CD8-positive, alpha-beta T cell (primary cell): ENCODE measurements at regions of chr14 and their contacts with region 1.

Region 1: GRCh38 chr14:21383848-21384493 is at the start of gene SUPT16H:
- DNase-seq: peak; percentile 83 to 97 (median 93)
- ATAC-seq: peak; percentile 88
- H3K4me3 ChIP-seq: peak within 1 kb of the TSS; percentile 87 to 91
- H3K4me3 Mint-ChIP-seq: peak within 1 kb of the TSS; percentile 98
- H3K27ac ChIP-seq: peak within 1 kb of the TSS; percentile 89 to 96
- H3K27ac Mint-ChIP-seq: peak within 1 kb of the TSS; percentile 99
- H3K4me1 ChIP-seq: peaks cover 17% of the 10 kb centered on the region
- H3K4me1 Mint-ChIP-seq: peaks cover 43% of the 10 kb centered on the region
- H3K27me3 ChIP-seq: no peaks in the 10 kb centered on the region
- H3K27me3 Mint-ChIP-seq: no peaks in the 10 kb centered on the region
- CTCF ChIP-seq: no peak
- total RNA-seq, gene SUPT16H: 53.5 to 54.9 TPM

Region 2: GRCh38 chr14:20365928-20366327 is 1018.0 kb before region 1 on chr14:
- CTCF ChIA-PET with region 1: no interaction called
- POLR2A ChIA-PET with region 1: no interaction called
- intact Hi-C with region 1: no loop called
- DNase-seq: no peak
- ATAC-seq: no peak
- H3K4me3 ChIP-seq: no peak overlapping the region
- H3K4me3 Mint-ChIP-seq: no peak overlapping the region
- H3K27ac ChIP-seq: no peak overlapping the region
- H3K27ac Mint-ChIP-seq: no peak overlapping the region
- H3K4me1 ChIP-seq: no peaks in the 10 kb centered on the region
- H3K4me1 Mint-ChIP-seq: no peaks in the 10 kb centered on the region
- H3K27me3 ChIP-seq: no peaks in the 10 kb centered on the region
- H3K27me3 Mint-ChIP-seq: no peaks in the 10 kb centered on the region
- CTCF ChIP-seq: no peak

Region 3: GRCh38 chr14:21044106-21044618 is 339.8 kb before region 1 on chr14:
- CTCF ChIA-PET with region 1: no interaction called
- POLR2A ChIA-PET with region 1: no interaction called
- intact Hi-C with region 1: no loop called
- DNase-seq: peak in 2 of 9 experiments; percentile 9 to 26
- ATAC-seq: no peak
- H3K4me3 ChIP-seq: no peak overlapping the region
- H3K4me3 Mint-ChIP-seq: no peak overlapping the region
- H3K27ac ChIP-seq: no peak overlapping the region
- H3K27ac Mint-ChIP-seq: no peak overlapping the region
- H3K4me1 ChIP-seq: no peaks in the 10 kb centered on the region
- H3K4me1 Mint-ChIP-seq: peaks cover 7% of the 10 kb centered on the region
- H3K27me3 ChIP-seq: peaks cover 0 to 3% of the 10 kb centered on the region in 2 experiments
- H3K27me3 Mint-ChIP-seq: peaks cover 27% of the 10 kb centered on the region
- CTCF ChIP-seq: no peak

Region 4: GRCh38 chr14:21308479-21309237 is 75.3 kb before region 1 on chr14:
- CTCF ChIA-PET with region 1: no interaction called
- POLR2A ChIA-PET with region 1: no interaction called
- intact Hi-C with region 1: loop called (anchors 2 kb)
- DNase-seq: peak; percentile 42 to 87 (median 73)
- ATAC-seq: peak; percentile 87
- H3K4me3 ChIP-seq: peak overlapping the region; percentile 42 to 44
- H3K4me3 Mint-ChIP-seq: peak overlapping the region; percentile 73
- H3K27ac ChIP-seq: peak overlapping the region; percentile 16 to 62
- H3K27ac Mint-ChIP-seq: peak overlapping the region; percentile 60
- H3K4me1 ChIP-seq: peaks cover 7% of the 10 kb centered on the region
- H3K4me1 Mint-ChIP-seq: peaks cover 17% of the 10 kb centered on the region
- H3K27me3 ChIP-seq: no peaks in the 10 kb centered on the region
- H3K27me3 Mint-ChIP-seq: no peaks in the 10 kb centered on the region
- CTCF ChIP-seq: no peak

Region 5: GRCh38 chr14:21395444-21395843 is 11.5 kb after region 1 on chr14:
- CTCF ChIA-PET with region 1: no interaction called
- POLR2A ChIA-PET with region 1: no interaction called
- intact Hi-C with region 1: no loop called
- DNase-seq: no peak
- ATAC-seq: no peak
- H3K4me3 ChIP-seq: no peak overlapping the region
- H3K4me3 Mint-ChIP-seq: no peak overlapping the region
- H3K27ac ChIP-seq: no peak overlapping the region
- H3K27ac Mint-ChIP-seq: no peak overlapping the region
- H3K4me1 ChIP-seq: no peaks in the 10 kb centered on the region
- H3K4me1 Mint-ChIP-seq: no peaks in the 10 kb centered on the region
- H3K27me3 ChIP-seq: no peaks in the 10 kb centered on the region
- H3K27me3 Mint-ChIP-seq: no peaks in the 10 kb centered on the region
- CTCF ChIP-seq: no peak

Region 6: GRCh38 chr14:21437063-21437901 is 53.3 kb after region 1 on chr14:
- CTCF ChIA-PET with region 1: no interaction called
- POLR2A ChIA-PET with region 1: interaction called, 9 read pairs
- intact Hi-C with region 1: loop called (anchors 1 kb)
- DNase-seq: peak; percentile 98 to 100 (median 99)
- ATAC-seq: peak; percentile 99
- H3K4me3 ChIP-seq: peak overlapping the region; percentile 74 to 83
- H3K4me3 Mint-ChIP-seq: peak overlapping the region; percentile 96
- H3K27ac ChIP-seq: peak overlapping the region; percentile 76 to 84
- H3K27ac Mint-ChIP-seq: peak overlapping the region; percentile 91
- H3K4me1 ChIP-seq: peaks cover 28% of the 10 kb centered on the region
- H3K4me1 Mint-ChIP-seq: peaks cover 64% of the 10 kb centered on the region
- H3K27me3 ChIP-seq: no peaks in the 10 kb centered on the region
- H3K27me3 Mint-ChIP-seq: no peaks in the 10 kb centered on the region
- CTCF ChIP-seq: no peak

Region 7: DNA sequence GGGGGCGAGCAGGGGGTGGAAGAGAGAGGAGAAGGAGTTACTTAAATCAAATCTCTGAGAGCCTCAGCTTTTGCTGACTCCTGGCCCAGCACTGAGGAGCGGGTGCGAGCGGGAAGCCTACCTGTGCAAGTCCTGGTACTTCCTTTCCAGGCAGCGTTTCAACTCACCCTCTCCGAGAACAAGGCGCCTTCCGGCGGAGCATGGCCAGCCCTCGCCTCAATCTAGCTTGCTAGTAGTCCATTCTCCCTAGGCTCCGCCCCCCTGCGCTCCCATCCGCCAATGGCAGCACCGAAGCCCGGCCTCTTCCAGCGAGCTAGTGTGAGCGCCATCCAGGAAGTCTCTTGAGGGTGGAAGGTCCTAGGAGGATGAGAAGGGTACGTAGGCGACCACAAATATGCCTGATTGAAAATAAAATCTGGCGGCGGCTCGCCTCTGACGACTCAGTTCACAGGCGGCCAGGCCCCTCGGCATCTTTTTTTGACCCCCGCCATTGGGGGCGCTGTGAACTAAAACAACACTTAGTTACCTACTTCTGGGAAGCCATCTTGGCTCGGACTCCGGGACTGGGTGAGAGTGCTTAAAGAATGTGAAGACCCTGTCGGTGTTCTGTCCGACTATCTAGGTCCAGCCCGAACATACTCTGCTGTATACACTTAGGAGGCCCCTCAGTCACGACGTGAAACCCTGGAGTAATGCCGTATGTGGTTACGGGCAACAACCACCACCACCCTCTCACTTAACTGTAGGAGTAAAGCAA is 72.1 kb after region 1 on chr14 and contains the start of gene CHD8:
- CTCF ChIA-PET with region 1: interaction called, 3 read pairs
- POLR2A ChIA-PET with region 1: interaction called, 4 read pairs
- intact Hi-C with region 1: loop called (anchors 1 kb)
- DNase-seq: peak; percentile 98 to 100 (median 99)
- ATAC-seq: peak; percentile 96
- H3K4me3 ChIP-seq: peak within 1 kb of the TSS; percentile 85 to 97
- H3K4me3 Mint-ChIP-seq: peak within 1 kb of the TSS; percentile 100
- H3K27ac ChIP-seq: peak within 1 kb of the TSS; percentile 86 to 98
- H3K27ac Mint-ChIP-seq: peak within 1 kb of the TSS; percentile 100
- H3K4me1 ChIP-seq: peaks cover 21% of the 10 kb centered on the region
- H3K4me1 Mint-ChIP-seq: peaks cover 36% of the 10 kb centered on the region
- H3K27me3 ChIP-seq: no peaks in the 10 kb centered on the region
- H3K27me3 Mint-ChIP-seq: no peaks in the 10 kb centered on the region
- CTCF ChIP-seq: peak; percentile 60
- total RNA-seq, gene CHD8: 132 to 144 TPM

Region 8: GRCh38 chr14:21734457-21735074 is 350.6 kb after region 1 on chr14:
- CTCF ChIA-PET with region 1: no interaction called
- POLR2A ChIA-PET with region 1: no interaction called
- intact Hi-C with region 1: no loop called
- DNase-seq: peak in 5 of 9 experiments; percentile 11 to 83 (median 49)
- ATAC-seq: peak; percentile 37
- H3K4me3 ChIP-seq: no peak overlapping the region
- H3K4me3 Mint-ChIP-seq: peak overlapping the region; percentile 45
- H3K27ac ChIP-seq: no peak overlapping the region
- H3K27ac Mint-ChIP-seq: peak overlapping the region; percentile 37
- H3K4me1 ChIP-seq: no peaks in the 10 kb centered on the region
- H3K4me1 Mint-ChIP-seq: peaks cover 18% of the 10 kb centered on the region
- H3K27me3 ChIP-seq: no peaks in the 10 kb centered on the region
- H3K27me3 Mint-ChIP-seq: peaks cover 33% of the 10 kb centered on the region
- CTCF ChIP-seq: peak; percentile 75